Activated CD8-positive, alpha-beta memory T cell treated with anti-CD3 and anti-CD28 coated beads, Interleukin-2, amount 10 ng/mL, durations not matched to agents 7 days and 5 days (primary cell): ENCODE measurements at regions of chr16 and their contacts with region 1.

Region 1: DNA sequence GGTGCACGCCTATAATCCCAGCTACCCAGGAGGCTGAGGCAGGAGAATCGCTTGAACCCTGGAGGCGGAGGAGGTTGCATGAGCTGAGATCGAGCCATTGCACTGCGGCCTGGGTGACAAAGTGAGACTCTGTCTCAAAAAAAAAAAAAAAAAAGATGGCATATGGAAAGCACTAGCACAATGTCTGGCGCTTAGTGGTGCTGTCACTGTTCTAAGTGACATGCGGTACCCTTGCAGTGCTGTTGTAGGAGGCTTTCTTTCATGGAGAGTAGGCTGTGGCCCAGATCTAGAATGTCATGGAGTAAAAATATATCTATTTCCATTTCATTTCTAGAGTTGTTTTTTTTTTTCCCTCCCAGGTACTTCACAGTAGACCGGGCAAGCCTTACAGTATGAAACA is 14.6 kb upstream of the METTL9 start:
- DNase-seq: no peak
- ATAC-seq: no peak
- H3K4me3 Mint-ChIP-seq: no peak overlapping the region
- H3K27ac Mint-ChIP-seq: no peak overlapping the region
- H3K4me1 Mint-ChIP-seq: peaks cover 3% of the 10 kb centered on the region
- H3K27me3 Mint-ChIP-seq: peaks cover 3% of the 10 kb centered on the region

Region 2: DNA sequence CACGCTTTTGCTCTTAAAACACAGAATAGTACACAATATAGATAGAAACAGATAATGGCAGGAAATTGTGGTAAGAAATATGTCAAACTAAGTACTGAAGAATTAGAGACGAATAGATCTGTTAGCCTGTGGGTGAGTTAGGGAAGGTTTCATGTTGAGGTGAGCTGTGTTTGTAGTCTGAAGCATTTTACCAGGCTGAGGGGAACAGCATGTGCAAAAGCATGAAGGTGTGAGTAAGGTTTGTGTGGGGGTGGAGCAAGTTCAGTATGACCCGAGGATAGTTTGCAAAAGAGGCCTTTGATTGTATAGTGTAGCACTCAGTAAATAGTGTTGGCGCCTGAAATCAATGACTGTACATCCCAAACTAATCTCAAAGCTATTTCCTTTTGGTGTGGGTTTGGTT is 53.8 kb after region 1 on chr16:
- CTCF ChIA-PET with region 1: interaction called, 99 read pairs
- DNase-seq: peak; percentile 51
- ATAC-seq: peak; percentile 67
- H3K4me3 Mint-ChIP-seq: no peak overlapping the region
- H3K27ac Mint-ChIP-seq: peak overlapping the region; percentile 79
- H3K4me1 Mint-ChIP-seq: peaks cover 27% of the 10 kb centered on the region
- H3K27me3 Mint-ChIP-seq: no peaks in the 10 kb centered on the region

Region 3: GRCh38 chr16:21646721-21647561 is 62.1 kb after region 1 on chr16:
- CTCF ChIA-PET with region 1: interaction called, 99 read pairs
- DNase-seq: peak; percentile 95
- ATAC-seq: peak; percentile 90
- H3K4me3 Mint-ChIP-seq: peak overlapping the region; percentile 40
- H3K27ac Mint-ChIP-seq: peak overlapping the region; percentile 91
- H3K4me1 Mint-ChIP-seq: peaks cover 55% of the 10 kb centered on the region
- H3K27me3 Mint-ChIP-seq: no peaks in the 10 kb centered on the region

Region 4: DNA sequence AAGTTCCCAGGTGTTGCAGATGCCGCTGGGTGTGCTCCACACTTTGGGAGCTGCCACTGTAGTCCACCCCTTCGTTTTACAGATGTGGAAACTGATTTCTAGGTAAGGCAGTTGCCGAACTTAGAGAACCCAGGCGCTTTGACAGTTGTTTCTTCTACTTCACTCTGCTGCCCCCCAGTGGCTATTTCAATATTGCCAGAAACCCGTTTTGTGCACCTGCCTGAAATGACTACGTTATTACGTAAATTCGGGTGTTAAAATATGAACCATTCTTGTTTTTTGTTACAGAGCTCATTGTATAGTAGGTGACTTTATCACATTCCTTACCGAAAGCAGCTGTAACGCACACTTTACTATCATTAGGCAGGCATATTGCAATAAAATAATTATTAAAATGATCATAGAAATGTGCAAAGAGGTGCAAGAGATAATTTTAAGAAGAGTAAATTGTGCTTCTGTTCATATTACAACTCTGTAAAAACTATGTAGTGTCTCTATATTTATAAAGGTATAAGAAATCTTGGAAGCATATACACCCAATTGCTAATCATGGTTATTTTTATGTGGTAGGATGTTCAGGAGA is 123.8 kb after region 1 on chr16:
- CTCF ChIA-PET with region 1: interaction called, 23 read pairs
- DNase-seq: peak; percentile 91
- ATAC-seq: peak; percentile 83
- H3K4me3 Mint-ChIP-seq: no peak overlapping the region
- H3K27ac Mint-ChIP-seq: no peak overlapping the region
- H3K4me1 Mint-ChIP-seq: peaks cover 9% of the 10 kb centered on the region
- H3K27me3 Mint-ChIP-seq: no peaks in the 10 kb centered on the region